ENCODE measurements at regions of chr11 and their contacts with region 1.

Region 1: GRCh38 chr11:17207317-17208258 is at the start of gene PIK3C2A:
- DNase-seq: peak; percentile 96
- CTCF ChIP-seq: no peak

Region 2: DNA sequence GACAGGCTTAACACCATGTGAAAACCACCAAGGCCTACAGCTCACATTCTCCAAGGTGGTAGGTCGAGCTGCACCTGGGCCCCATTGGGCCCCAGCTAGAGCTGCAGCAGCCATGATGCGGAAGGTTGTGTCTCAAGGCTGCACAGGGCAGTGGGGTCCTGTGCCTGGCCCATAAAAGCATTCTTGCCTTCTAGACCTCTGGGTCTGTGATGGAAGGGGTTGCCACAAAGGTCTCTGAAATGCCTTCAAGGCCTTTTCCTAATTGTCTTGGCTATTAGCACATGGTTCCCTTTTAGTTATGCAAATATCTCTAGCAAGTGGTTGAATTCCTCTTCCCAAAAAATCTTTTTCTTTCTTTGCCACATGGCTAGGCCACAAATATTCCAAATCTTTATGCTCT is 521.7 kb before region 1 on chr11:
- CTCF ChIA-PET with region 1: no interaction called
- POLR2A ChIA-PET with region 1: no interaction called
- DNase-seq: no peak
- CTCF ChIP-seq: no peak

Region 3: DNA sequence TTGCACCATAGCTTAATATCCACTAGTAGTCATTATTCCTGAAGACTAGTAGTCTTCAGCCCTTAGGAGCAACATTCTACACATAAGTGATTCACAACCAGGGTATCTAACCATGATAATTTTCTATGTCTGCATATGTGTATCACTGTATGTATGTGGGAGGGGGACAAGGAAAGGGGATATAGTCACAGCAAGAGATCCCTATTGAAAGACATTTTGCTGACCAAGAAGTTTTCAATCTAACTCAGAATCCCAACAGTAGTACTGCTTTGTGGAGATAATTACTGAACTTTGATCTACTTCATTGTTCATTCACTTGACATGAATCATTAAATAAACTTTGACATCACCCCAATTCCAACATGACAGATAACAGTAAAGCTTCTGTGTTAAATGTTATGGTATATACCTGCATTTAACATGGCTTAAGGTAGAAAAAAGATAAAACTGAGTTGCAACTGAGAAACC is 10.1 kb before region 1 on chr11:
- CTCF ChIA-PET with region 1: interaction called, 10 read pairs
- POLR2A ChIA-PET with region 1: no interaction called
- DNase-seq: no peak
- CTCF ChIP-seq: no peak

Region 4: GRCh38 chr11:17314232-17314547 is 106.6 kb after region 1 on chr11:
- CTCF ChIA-PET with region 1: no interaction called
- POLR2A ChIA-PET with region 1: no interaction called
- DNase-seq: no peak
- CTCF ChIP-seq: no peak

Measured in GM10248 (cell line).